Pancreas (tissue), 10 donors: ENCODE measurements at regions of chr17 and their contacts with region 1.

Region 1: GRCh38 chr17:58417300-58418092 is at the start of gene RNF43:
- DNase-seq: peak; percentile 72 to 99 (median 96)
- ATAC-seq: peak; percentile 94 to 98 (median 98)
- H3K4me3 ChIP-seq: peak within 1 kb of the TSS; percentile 27 to 52 (median 44)
- H3K27ac ChIP-seq: peak within 1 kb of the TSS; percentile 66 to 93 (median 85)
- H3K4me1 ChIP-seq: peaks cover 0 to 17% (median 7%) of the 10 kb centered on the region in 3 donors
- H3K27me3 ChIP-seq: no peaks in the 10 kb centered on the region
- CTCF ChIP-seq: peak; percentile 28 to 64 (median 50)
- total RNA-seq, gene RNF43: 4.5 to 12.5 (median 6.2) TPM

Region 2: DNA sequence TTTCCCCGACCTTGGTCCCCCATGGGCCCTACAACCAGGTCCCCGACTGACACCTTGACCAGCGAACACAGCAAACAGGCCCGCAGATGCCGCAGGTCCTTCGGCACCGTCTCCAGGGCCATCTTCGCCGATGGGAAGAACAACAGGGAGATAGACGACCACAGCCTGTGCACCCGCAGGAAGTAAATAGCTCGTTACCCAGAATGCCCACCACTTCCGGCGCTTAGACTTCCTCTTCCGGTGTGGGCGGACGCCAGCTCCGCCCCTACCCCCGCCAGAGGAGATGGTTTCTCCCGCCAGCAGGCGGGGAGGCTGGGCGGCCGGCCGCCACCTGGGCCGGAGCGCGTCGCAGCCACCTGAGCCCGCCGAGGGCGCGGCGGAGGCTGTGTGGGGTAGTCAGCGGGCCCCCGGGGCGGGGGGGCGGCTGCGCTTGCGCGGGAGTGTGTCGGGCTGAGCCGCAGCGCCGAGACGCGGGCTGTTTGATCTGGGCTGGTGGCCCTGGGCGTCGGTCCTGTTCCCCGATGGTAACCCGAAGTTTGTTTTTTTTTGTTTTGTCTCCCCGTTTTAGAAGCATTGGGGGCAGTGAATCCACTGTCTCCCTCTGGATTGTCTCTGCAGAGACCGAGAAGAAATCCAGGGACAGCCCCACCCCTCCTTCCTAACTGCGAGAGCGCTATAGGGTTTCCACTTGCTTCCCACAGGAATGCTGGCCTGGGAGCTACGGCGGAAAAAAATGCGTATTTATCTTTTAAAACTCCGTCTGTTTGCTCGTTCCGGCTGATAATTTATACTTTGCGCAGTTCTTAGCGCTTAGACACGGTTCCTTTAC is 65.3 kb before region 1 on chr17 and contains the start of gene SUPT4H1:
- intact Hi-C with region 1: loop called in 2 of 3 experiments (anchors 10 kb)
- DNase-seq: peak; percentile 89 to 97 (median 95)
- ATAC-seq: peak; percentile 96 to 99 (median 98)
- H3K4me3 ChIP-seq: peak within 1 kb of the TSS; percentile 45 to 96 (median 74)
- H3K27ac ChIP-seq: peak within 1 kb of the TSS; percentile 72 to 91 (median 82)
- H3K4me1 ChIP-seq: peaks cover 6 to 10% (median 6%) of the 10 kb centered on the region in 3 donors
- H3K27me3 ChIP-seq: no peaks in the 10 kb centered on the region
- CTCF ChIP-seq: no peak
- total RNA-seq, gene SUPT4H1: 14.1 to 43.7 (median 26.5) TPM

Region 3: GRCh38 chr17:58377093-58377601 is 40.3 kb before region 1 on chr17:
- intact Hi-C with region 1: loop called in 1 of 3 experiments (anchors 10 kb)
- DNase-seq: peak in 2 of 6 donors; percentile 25 to 42
- ATAC-seq: peak in 3 of 4 donors; percentile 53 to 55 (median 53)
- H3K4me3 ChIP-seq: no peak overlapping the region
- H3K27ac ChIP-seq: no peak overlapping the region
- H3K4me1 ChIP-seq: peaks cover 19 to 44% (median 41%) of the 10 kb centered on the region in 3 donors
- H3K27me3 ChIP-seq: no peaks in the 10 kb centered on the region
- CTCF ChIP-seq: no peak